ENCODE measurements at regions of chr15 and their contacts with region 1.

Region 1: GRCh38 chr15:77821188-77821958 is 188.7 kb upstream of the LINGO1 start:
- DNase-seq: peak; percentile 77 to 93
- ATAC-seq: peak; percentile 76 to 92
- H3K4me3 ChIP-seq: no peak overlapping the region
- H3K27ac ChIP-seq: no peak overlapping the region
- H3K4me1 ChIP-seq: peaks cover 8% of the 10 kb centered on the region; the same call in 1 of the 3 replicates
- CTCF ChIP-seq: peak; percentile 81
- EP300 ChIP-seq: no peak
- POLR2A ChIP-seq: no peak
- RAD21 ChIP-seq: peak; percentile 90 to 95

Region 2: DNA sequence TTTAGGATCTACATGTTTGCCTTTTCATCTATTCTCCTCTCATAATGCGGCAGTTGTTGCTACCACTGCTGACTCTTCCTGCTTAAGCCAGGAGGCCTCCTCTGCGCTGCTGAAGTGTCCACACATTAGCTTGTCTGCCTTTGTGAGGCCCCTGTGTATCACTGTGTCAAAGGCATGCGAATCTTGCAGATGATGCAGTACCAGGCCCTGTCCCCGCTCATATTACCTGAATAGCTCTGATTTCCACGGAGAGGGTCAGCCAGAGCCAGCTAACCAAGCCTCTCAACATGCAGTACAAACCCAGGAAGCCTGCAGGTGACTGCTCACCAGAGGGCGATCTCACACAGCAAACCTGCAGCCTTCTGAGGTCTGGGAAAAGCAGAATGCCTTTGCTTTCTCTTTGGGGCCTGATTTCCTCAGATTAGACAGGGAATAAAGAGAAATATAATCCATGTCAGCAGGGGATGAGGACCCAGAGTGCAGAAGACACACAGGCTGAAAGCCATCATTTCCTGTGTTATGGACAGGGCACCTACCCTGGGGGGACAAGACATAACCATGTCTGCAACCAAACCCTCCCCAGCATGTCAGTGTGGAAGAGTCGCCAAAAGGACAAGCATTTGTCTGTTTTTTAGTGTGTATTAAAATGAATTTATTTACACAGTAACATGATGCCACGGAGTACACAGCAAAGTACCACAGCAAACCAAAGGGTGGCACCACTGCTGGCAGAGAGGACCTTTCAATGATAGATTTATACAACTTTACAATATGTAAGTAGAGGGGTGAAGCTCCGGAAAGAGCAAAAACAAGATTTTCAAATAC is 713.6 kb before region 1 on chr15:
- CTCF ChIA-PET with region 1: interaction called, 14 read pairs
- POLR2A ChIA-PET with region 1: no interaction called
- DNase-seq: peak; percentile 53 to 60
- ATAC-seq: peak; percentile 89 to 95
- H3K4me3 ChIP-seq: no peak overlapping the region
- H3K27ac ChIP-seq: no peak overlapping the region
- H3K4me1 ChIP-seq: no peaks in the 10 kb centered on the region
- CTCF ChIP-seq: peak; percentile 72
- EP300 ChIP-seq: no peak
- POLR2A ChIP-seq: no peak
- RAD21 ChIP-seq: peak; percentile 80 to 89

Region 3: GRCh38 chr15:77617476-77618230 is 203.7 kb before region 1 on chr15:
- CTCF ChIA-PET with region 1: interaction called, 22 read pairs
- POLR2A ChIA-PET with region 1: no interaction called
- DNase-seq: peak; percentile 60 to 69
- ATAC-seq: peak; percentile 47 to 84; a peak in 4 of 6 replicates
- H3K4me3 ChIP-seq: no peak overlapping the region
- H3K27ac ChIP-seq: no peak overlapping the region
- H3K4me1 ChIP-seq: no peaks in the 10 kb centered on the region; the same call in 2 of the 3 replicates
- CTCF ChIP-seq: peak; percentile 52
- EP300 ChIP-seq: no peak
- POLR2A ChIP-seq: no peak
- RAD21 ChIP-seq: no peak

Region 4: GRCh38 chr15:77659350-77660321 is 161.7 kb before region 1 on chr15:
- CTCF ChIA-PET with region 1: interaction called, 44 read pairs
- POLR2A ChIA-PET with region 1: no interaction called
- DNase-seq: peak; percentile 67 to 91
- ATAC-seq: peak; percentile 46 to 85; a peak in 5 of 6 replicates
- H3K4me3 ChIP-seq: 0 out of 3 replicates have a peak overlapping the region, but pooled peaks have one; percentile 17
- H3K27ac ChIP-seq: no peak overlapping the region
- H3K4me1 ChIP-seq: no peaks in the 10 kb centered on the region
- CTCF ChIP-seq: peak; percentile 73
- EP300 ChIP-seq: no peak
- POLR2A ChIP-seq: no peak
- RAD21 ChIP-seq: peak; percentile 48 to 63; a peak in 4 of 5 replicates

Region 5: GRCh38 chr15:77798151-77798835 is 23.1 kb before region 1 on chr15:
- CTCF ChIA-PET with region 1: interaction called, 24 read pairs
- POLR2A ChIA-PET with region 1: no interaction called
- DNase-seq: no peak
- ATAC-seq: no peak
- H3K4me3 ChIP-seq: no peak overlapping the region
- H3K27ac ChIP-seq: no peak overlapping the region
- H3K4me1 ChIP-seq: no peaks in the 10 kb centered on the region
- CTCF ChIP-seq: no peak
- EP300 ChIP-seq: no peak
- POLR2A ChIP-seq: no peak
- RAD21 ChIP-seq: no peak

Region 6: DNA sequence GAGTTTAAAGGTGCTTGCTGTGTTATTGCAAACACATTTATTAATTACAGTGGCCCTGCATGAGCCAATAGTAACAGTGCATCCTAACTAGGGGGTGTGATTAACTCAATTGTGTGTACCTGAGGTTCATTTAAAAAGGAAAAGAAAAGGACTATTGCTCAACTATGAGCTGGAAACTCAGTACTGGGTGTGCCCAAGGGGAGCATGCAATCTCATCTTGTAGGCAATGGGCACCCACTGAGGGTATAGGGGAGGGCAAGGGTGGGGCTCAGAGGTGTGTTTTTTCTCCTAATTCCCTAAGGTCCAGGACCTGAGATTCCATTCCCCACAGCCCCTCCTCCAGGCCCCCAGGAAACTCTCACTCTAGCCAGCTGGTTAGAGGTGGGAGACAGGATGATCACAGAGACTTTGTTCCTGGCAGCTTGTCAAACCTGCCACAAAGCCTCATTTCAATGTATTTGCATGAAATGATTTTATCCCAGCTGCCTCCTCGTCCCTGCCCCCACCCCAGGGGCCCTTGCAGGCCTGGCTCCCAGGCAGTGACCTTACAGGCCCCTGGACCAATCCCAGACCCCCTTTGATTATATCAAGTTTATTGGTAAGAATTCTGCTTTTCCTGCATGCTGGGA is 35.5 kb after region 1 on chr15:
- CTCF ChIA-PET with region 1: interaction called, 15 read pairs
- POLR2A ChIA-PET with region 1: no interaction called
- DNase-seq: no peak
- ATAC-seq: no peak
- H3K4me3 ChIP-seq: no peak overlapping the region
- H3K27ac ChIP-seq: no peak overlapping the region
- H3K4me1 ChIP-seq: no peaks in the 10 kb centered on the region
- CTCF ChIP-seq: no peak
- EP300 ChIP-seq: no peak
- POLR2A ChIP-seq: no peak
- RAD21 ChIP-seq: no peak

Region 7: DNA sequence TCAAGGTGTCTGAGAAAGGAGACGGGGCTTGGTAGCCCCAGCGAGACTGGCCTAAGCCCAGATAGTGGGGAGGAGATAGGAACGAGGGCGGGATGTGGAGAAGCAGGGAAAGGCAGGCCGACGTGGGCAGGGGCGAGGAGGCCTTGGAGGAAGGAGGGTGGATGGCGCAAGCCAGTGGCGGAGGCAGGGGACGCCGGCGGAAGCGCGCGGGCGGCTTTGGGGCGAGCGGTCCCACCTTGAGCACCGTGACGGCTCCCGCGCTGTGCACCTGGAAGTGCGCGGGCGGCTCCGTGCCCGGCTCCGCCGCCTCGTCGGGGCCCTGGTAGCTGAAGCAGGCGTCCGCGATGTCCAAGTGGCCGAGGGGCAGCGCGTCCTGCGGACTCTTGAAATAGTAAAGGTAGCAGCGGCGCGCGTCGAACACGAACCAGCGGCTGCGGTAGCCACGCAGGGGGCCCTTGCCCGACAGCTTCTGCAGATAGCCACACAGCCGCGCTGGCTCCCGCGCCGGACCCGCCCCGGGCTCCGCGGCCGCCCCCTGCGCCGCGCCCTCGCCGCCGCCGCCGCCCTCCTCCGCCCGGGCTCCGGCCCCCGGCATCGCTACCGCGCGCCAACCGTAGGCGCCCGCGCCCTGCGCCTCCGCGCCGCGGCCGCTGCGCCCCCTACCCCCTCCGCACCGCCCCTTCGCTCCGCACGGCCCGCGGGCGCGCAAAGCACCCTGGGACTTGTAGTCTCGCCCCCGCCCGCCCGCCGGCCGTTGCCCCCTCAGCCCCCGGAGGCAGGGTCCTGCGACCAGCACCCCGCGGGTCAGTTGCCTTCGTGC is 255.9 kb after region 1 on chr15 and contains the start of gene TBC1D2B:
- CTCF ChIA-PET with region 1: no interaction called
- POLR2A ChIA-PET with region 1: no interaction called
- DNase-seq: peak; percentile 55 to 58
- ATAC-seq: peak; percentile 80 to 83
- H3K4me3 ChIP-seq: peak within 1 kb of the TSS; percentile 83
- H3K27ac ChIP-seq: peak within 1 kb of the TSS; percentile 81 to 91
- H3K4me1 ChIP-seq: peaks cover 20% of the 10 kb centered on the region
- CTCF ChIP-seq: peak; percentile 31; the same call in 1 of the 3 replicates
- EP300 ChIP-seq: no peak
- POLR2A ChIP-seq: peak; percentile 65
- RAD21 ChIP-seq: no peak
- polyA plus RNA-seq, gene TBC1D2B: 13.9 and 14.9 TPM in 2 replicates

Region 8: DNA sequence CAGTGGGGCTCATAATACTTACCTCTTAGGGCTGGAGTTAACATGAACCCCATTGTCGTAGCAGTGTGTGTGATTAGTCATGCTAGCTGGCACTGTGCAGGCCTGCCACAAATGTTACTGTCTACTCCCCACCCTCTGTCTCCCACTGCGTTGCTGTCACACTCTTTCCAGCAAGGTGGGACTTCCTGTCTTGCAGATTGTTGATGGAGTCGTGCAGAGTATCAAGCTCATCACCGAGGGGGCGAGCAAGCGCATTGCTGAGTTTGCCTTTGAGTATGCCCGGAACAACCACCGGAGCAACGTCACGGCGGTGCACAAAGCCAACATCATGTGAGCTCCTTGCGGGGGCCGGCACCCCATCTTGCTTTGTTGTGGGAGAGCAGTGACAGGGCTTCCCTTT is 340.7 kb after region 1 on chr15:
- CTCF ChIA-PET with region 1: no interaction called
- POLR2A ChIA-PET with region 1: no interaction called
- DNase-seq: no peak
- ATAC-seq: no peak
- H3K4me3 ChIP-seq: no peak overlapping the region
- H3K27ac ChIP-seq: no peak overlapping the region
- H3K4me1 ChIP-seq: no peaks in the 10 kb centered on the region; the same call in 2 of the 3 replicates
- CTCF ChIP-seq: no peak
- EP300 ChIP-seq: no peak
- POLR2A ChIP-seq: no peak
- RAD21 ChIP-seq: no peak

Measured in A549 (cell line).